Activated B cell treated with CpG ODN at 0.5 μM for 24 hours (primary cell): ENCODE measurements at regions of chr16 and their contacts with region 1.

Region 1: GRCh38 chr16:30491744-30492308 is 19.3 kb downstream of the ITGAL start:
- DNase-seq: no peak
- ATAC-seq: no peak
- H3K4me3 Mint-ChIP-seq: no peak overlapping the region
- H3K27ac Mint-ChIP-seq: peak overlapping the region; percentile 9
- H3K4me1 Mint-ChIP-seq: peaks cover 4% of the 10 kb centered on the region
- H3K27me3 Mint-ChIP-seq: no peaks in the 10 kb centered on the region
- CTCF ChIP-seq: no peak

Region 2: GRCh38 chr16:30519120-30520049 is 27.6 kb after region 1 on chr16:
- CTCF ChIA-PET with region 1: no interaction called
- POLR2A ChIA-PET with region 1: interaction called, 15 read pairs
- intact Hi-C with region 1: no loop called
- DNase-seq: no peak
- ATAC-seq: no peak
- H3K4me3 Mint-ChIP-seq: no peak overlapping the region
- H3K27ac Mint-ChIP-seq: no peak overlapping the region
- H3K4me1 Mint-ChIP-seq: no peaks in the 10 kb centered on the region
- H3K27me3 Mint-ChIP-seq: no peaks in the 10 kb centered on the region
- CTCF ChIP-seq: no peak

Region 3: DNA sequence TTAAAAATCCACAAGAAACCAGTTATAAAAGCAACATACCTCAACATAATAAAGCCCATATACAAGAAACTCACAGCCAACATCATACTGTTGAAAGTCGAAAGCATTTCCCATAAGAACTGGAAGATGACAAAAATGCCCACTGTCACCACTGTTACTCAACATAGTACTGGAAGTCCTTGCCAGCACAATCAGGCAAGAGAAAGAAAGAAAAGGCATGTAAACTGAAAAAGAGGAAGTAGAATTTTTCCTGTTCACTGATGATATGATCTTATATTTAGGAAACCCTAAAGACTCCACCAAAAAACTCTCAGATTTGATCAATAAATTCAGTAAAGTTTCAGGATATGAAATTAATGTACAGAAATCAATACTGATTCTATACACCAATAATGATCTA is 1081.0 kb after region 1 on chr16:
- CTCF ChIA-PET with region 1: no interaction called
- POLR2A ChIA-PET with region 1: no interaction called
- intact Hi-C with region 1: no loop called
- DNase-seq: no peak
- ATAC-seq: no peak
- H3K4me3 Mint-ChIP-seq: no peak overlapping the region
- H3K27ac Mint-ChIP-seq: no peak overlapping the region
- H3K4me1 Mint-ChIP-seq: peaks cover 6% of the 10 kb centered on the region
- H3K27me3 Mint-ChIP-seq: peaks cover 36% of the 10 kb centered on the region
- CTCF ChIP-seq: no peak